Activated T-helper 2 cell treated with anti-CD3 and anti-CD28 coated beads, Interferon-gamma antibody, Interleukin-2, Interleukin-4, amounts not matched to agents 10 μg/mL and 5 μg/mL and 100 μg/mL, durations not matched to agents 14 hours and 24 hours and 36 hours (primary cell): ENCODE measurements at regions of chr7 and their contacts with region 1.

Region 1: GRCh38 chr7:142782922-142783900 is 12.4 kb downstream of the PRSS2 start:
- DNase-seq: peak; percentile 65
- H3K4me3 Mint-ChIP-seq: peak overlapping the region; percentile 70
- H3K27ac Mint-ChIP-seq: peak overlapping the region; percentile 85
- H3K4me1 Mint-ChIP-seq: peaks cover 13% of the 10 kb centered on the region
- H3K27me3 Mint-ChIP-seq: no peaks in the 10 kb centered on the region

Region 2: GRCh38 chr7:142632291-142633134 is 150.7 kb before region 1 on chr7:
- intact Hi-C with region 1: loop called (anchors 2 kb)
- DNase-seq: peak; percentile 33
- H3K4me3 Mint-ChIP-seq: no peak overlapping the region
- H3K27ac Mint-ChIP-seq: no peak overlapping the region
- H3K4me1 Mint-ChIP-seq: peaks cover 11% of the 10 kb centered on the region
- H3K27me3 Mint-ChIP-seq: peaks cover 16% of the 10 kb centered on the region

Region 3: GRCh38 chr7:142669074-142669654 is 114.0 kb before region 1 on chr7:
- intact Hi-C with region 1: loop called (anchors 1 kb)
- DNase-seq: no peak
- H3K4me3 Mint-ChIP-seq: no peak overlapping the region
- H3K27ac Mint-ChIP-seq: no peak overlapping the region
- H3K4me1 Mint-ChIP-seq: peaks cover 26% of the 10 kb centered on the region
- H3K27me3 Mint-ChIP-seq: no peaks in the 10 kb centered on the region

Region 4: DNA sequence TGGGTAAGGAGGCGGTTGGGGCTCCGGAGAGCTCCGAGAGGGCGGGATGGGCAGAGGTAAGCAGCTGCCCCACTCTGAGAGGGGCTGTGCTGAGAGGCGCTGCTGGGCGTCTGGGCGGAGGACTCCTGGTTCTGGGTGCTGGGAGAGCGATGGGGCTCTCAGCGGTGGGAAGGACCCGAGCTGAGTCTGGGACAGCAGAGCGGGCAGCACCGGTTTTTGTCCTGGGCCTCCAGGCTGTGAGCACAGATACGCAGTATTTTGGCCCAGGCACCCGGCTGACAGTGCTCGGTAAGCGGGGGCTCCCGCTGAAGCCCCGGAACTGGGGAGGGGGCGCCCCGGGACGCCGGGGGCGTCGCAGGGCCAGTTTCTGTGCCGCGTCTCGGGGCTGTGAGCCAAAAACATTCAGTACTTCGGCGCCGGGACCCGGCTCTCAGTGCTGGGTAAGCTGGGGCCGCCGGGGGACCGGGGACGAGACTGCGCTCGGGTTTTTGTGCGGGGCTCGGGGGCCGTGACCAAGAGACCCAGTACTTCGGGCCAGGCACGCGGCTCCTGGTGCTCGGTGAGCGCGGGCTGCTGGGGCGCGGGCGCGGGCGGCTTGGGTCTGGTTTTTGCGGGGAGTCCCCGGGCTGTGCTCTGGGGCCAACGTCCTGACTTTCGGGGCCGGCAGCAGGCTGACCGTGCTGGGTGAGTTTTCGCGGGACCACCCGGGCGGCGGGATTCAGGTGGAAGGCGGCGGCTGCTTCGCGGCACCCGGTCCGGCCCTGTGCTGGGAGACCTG is 13.6 kb after region 1 on chr7:
- intact Hi-C with region 1: loop called (anchors 1 kb)
- DNase-seq: no peak
- H3K4me3 Mint-ChIP-seq: peak overlapping the region; percentile 95
- H3K27ac Mint-ChIP-seq: peak overlapping the region; percentile 99
- H3K4me1 Mint-ChIP-seq: peaks cover 64% of the 10 kb centered on the region
- H3K27me3 Mint-ChIP-seq: no peaks in the 10 kb centered on the region